ENCODE measurements at regions of chr15 and their contacts with region 1.

Region 1: GRCh38 chr15:73737535-73737934 is 15.6 kb downstream of the INSYN1 start:
- DNase-seq: no peak
- ATAC-seq: peak in 2 of 8 donors; percentile 17 to 34
- H3K4me3 ChIP-seq: no peak overlapping the region
- H3K27ac ChIP-seq: no peak overlapping the region
- H3K4me1 ChIP-seq: peaks cover 0 to 16% (median 3%) of the 10 kb centered on the region in 9 donors
- H3K27me3 ChIP-seq: peaks cover 0 to 4% (median 0%) of the 10 kb centered on the region in 7 donors
- CTCF ChIP-seq: no peak

Region 2: GRCh38 chr15:73786518-73786917 is 49.0 kb after region 1 on chr15:
- intact Hi-C with region 1: loop called in 1 of 10 experiments (anchors 5 kb)
- DNase-seq: peak in 1 of 2 donors; percentile 42
- ATAC-seq: peak in 6 of 8 donors; percentile 10 to 70 (median 40)
- H3K4me3 ChIP-seq: no peak overlapping the region
- H3K27ac ChIP-seq: no peak overlapping the region
- H3K4me1 ChIP-seq: peaks cover 0 to 18% (median 5%) of the 10 kb centered on the region in 9 donors
- H3K27me3 ChIP-seq: no peaks in the 10 kb centered on the region
- CTCF ChIP-seq: no peak

Region 3: GRCh38 chr15:73822998-73823397 is 85.5 kb after region 1 on chr15:
- intact Hi-C with region 1: no loop called
- DNase-seq: no peak
- ATAC-seq: no peak
- H3K4me3 ChIP-seq: no peak overlapping the region
- H3K27ac ChIP-seq: no peak overlapping the region
- H3K4me1 ChIP-seq: no peaks in the 10 kb centered on the region
- H3K27me3 ChIP-seq: peaks cover 0 to 5% (median 0%) of the 10 kb centered on the region in 7 donors
- CTCF ChIP-seq: no peak

Measured in heart right ventricle (tissue), 16 donors.